Heart right ventricle (tissue), 16 donors: ENCODE measurements at regions of chr4 and their contacts with region 1.

Region 1: GRCh38 chr4:99383833-99384392 is 31.4 kb upstream of the ADH1C start:
- DNase-seq: peak in 1 of 2 donors; percentile 47
- ATAC-seq: peak in 7 of 8 donors; percentile 78 to 93 (median 91)
- H3K4me3 ChIP-seq: no peak overlapping the region
- H3K27ac ChIP-seq: peak overlapping the region; percentile 54 to 82 (median 73)
- H3K4me1 ChIP-seq: peaks cover 0 to 15% (median 3%) of the 10 kb centered on the region in 9 donors
- H3K27me3 ChIP-seq: no peaks in the 10 kb centered on the region
- CTCF ChIP-seq: no peak

Region 2: DNA sequence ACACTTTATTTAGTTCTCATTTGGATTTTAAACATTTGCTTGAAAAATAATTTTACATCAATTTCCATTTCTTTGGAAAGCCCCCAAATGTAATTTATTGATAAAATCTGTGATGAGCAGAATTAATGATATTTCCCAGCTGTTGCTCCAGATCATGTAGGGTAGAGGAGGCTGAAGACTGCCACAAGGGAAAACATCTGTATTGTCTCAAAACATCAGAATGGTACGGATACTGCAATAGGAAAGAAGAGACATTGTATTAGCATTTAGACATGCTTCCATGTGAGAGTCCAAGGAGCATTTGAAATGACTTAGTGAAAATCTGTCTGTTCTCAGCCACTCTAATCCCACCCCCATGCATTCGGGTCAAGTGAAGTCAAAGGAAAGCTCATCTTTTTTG is 107.5 kb before region 1 on chr4:
- intact Hi-C with region 1: no loop called
- DNase-seq: peak in 1 of 2 donors; percentile 8
- ATAC-seq: peak in 5 of 8 donors; percentile 42 to 69 (median 54)
- H3K4me3 ChIP-seq: no peak overlapping the region
- H3K27ac ChIP-seq: peak overlapping the region in 3 of 10 donors; percentile 3 to 41 (median 41)
- H3K4me1 ChIP-seq: peaks cover 0 to 4% (median 0%) of the 10 kb centered on the region in 9 donors
- H3K27me3 ChIP-seq: no peaks in the 10 kb centered on the region
- CTCF ChIP-seq: no peak

Region 3: GRCh38 chr4:99324979-99325378 is 58.9 kb before region 1 on chr4:
- intact Hi-C with region 1: loop called in 1 of 10 experiments (anchors 10 kb)
- DNase-seq: peak; percentile 33 to 63
- ATAC-seq: peak; percentile 62 to 88 (median 84)
- H3K4me3 ChIP-seq: no peak overlapping the region
- H3K27ac ChIP-seq: peak overlapping the region in 7 of 10 donors; percentile 10 to 69 (median 56)
- H3K4me1 ChIP-seq: peaks cover 0 to 25% (median 17%) of the 10 kb centered on the region in 9 donors
- H3K27me3 ChIP-seq: no peaks in the 10 kb centered on the region
- CTCF ChIP-seq: no peak

Region 4: DNA sequence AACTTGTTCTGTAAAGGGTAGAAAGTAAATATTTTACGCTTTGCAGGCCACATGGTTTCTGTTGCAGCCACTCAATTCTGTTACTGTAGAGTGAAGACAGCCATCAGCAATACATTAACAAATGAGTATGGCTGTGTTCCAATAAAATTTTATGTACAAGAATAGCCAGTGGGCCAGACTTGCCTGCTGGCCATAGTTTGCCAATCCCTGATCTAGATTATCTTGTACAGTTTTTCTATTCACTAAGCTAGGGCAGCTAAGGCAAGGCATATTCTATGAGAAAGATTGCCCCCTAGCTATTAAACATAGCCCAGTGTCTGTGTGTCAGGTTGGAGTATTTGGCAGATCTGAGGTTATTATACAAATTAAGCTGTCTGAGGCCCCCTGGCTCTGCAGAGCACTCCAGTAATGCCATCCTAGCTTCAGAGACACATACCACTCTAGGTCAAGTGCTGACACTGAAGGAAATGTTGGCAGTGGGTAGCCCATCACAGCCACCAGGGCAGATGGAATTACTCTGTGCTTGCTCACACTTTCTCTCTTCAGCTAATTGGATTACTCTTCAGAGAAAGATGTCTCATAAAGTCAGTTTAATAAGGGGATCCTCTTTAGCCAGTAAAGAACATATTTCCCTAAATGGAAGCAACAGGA is 231.4 kb after region 1 on chr4:
- intact Hi-C with region 1: no loop called
- DNase-seq: peak; percentile 9 to 23
- ATAC-seq: peak; percentile 83 to 96 (median 93)
- H3K4me3 ChIP-seq: no peak overlapping the region
- H3K27ac ChIP-seq: peak overlapping the region in 7 of 10 donors; percentile 8 to 59 (median 42)
- H3K4me1 ChIP-seq: peaks cover 0 to 13% (median 0%) of the 10 kb centered on the region in 9 donors
- H3K27me3 ChIP-seq: no peaks in the 10 kb centered on the region
- CTCF ChIP-seq: peak in 5 of 9 donors; percentile 12 to 41 (median 30)

Region 5: GRCh38 chr4:99763635-99764101 is 379.8 kb after region 1 on chr4:
- intact Hi-C with region 1: no loop called
- DNase-seq: no peak
- ATAC-seq: peak in 1 of 8 donors; percentile 80
- H3K4me3 ChIP-seq: no peak overlapping the region
- H3K27ac ChIP-seq: no peak overlapping the region
- H3K4me1 ChIP-seq: peaks cover 0 to 9% (median 0%) of the 10 kb centered on the region in 9 donors
- H3K27me3 ChIP-seq: no peaks in the 10 kb centered on the region
- CTCF ChIP-seq: no peak